Activated B cell treated with CpG ODN at 0.5 μM for 24 hours (primary cell): ENCODE measurements at regions of chr12 and their contacts with region 1.

Region 1: DNA sequence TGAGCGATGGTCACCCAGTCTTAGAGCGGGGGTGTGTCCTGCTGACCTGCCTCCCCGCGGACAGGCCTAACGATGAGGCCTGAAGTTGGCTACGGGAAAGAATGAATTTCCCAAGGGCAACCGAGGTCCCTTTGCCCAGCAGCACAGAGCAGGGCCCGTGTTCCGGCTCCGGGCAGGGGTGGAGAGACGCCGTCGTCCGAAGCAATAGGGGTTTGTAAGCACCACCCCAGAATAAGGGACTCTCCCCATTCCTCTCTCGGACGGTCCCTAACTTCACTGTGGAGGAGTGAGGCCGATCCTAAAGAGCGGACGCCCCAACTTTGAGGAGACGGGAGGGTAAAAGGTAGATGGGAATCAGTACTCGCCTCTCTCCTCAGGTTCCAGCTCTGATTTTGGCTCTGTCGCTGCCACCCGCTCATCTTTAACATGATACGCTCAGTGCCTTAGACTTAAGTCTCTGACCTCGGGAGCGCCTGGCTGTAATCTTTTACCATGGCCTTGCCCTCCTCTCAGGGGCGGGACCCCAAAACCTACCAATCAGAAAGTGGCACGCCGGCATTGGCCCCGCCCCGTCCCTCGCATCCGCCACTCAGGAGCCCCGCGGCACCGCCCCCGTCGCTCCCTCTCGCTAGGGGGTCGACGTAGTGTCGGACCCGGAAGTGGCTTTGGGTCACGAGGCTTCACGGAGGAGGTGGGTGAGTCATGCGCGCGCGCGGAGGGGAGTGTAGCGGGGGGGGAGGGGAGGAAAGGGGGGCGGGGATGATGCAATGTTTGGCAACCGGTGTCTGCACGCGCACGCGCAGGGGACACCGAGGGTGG is at the start of gene DDIT3:
- DNase-seq: peak; percentile 99
- ATAC-seq: peak; percentile 73
- H3K4me3 Mint-ChIP-seq: peak within 1 kb of the TSS; percentile 98
- H3K27ac Mint-ChIP-seq: peak within 1 kb of the TSS; percentile 99
- H3K4me1 Mint-ChIP-seq: peaks cover 59% of the 10 kb centered on the region
- H3K27me3 Mint-ChIP-seq: no peaks in the 10 kb centered on the region
- CTCF ChIP-seq: no peak
- total RNA-seq, gene DDIT3: 30.5 and 34.3 TPM in 2 replicates

Region 2: DNA sequence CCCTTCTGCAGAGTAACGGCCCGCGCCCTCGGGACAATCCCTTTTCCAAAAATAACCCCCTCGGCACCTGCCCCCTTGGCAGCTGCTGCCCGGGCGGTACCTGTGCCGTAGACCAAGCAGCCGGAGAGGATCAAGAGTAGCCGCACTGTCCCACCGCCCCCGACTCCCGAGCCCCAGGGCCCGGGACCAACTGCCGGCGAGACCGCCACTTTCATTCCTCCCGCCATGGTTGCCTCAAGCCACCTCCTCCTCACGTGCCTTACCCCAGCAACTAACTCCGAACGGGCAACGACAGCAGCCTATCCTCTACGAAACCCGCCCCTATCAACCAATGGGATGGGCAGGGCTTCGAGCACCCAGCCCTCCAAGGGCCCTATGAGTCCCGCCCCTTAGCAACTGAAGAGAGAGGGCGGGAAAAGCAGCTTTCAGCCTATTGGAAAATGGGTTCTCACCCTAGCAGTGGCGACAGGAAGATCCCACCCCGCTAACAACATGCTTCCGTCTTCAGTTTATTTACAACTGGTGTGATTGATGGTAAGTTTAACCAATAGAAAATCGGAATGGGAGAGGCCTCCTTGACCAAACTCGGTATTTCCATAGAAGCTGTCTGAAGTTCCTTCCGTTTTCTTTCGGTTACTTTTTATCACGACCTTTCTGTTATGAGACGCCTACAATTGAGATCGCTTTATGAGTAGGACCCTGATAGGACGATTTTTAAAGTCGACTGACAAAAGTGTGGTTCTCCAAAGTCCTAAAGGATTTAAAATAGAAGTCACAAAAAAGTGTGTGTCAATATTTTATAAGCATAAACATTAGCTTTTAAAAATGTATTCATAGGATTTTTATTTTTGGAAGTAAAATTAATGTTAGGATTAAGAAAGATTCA is 441.5 kb before region 1 on chr12 and contains the start of gene NEMP1:
- CTCF ChIA-PET with region 1: no interaction called
- POLR2A ChIA-PET with region 1: no interaction called
- intact Hi-C with region 1: no loop called
- DNase-seq: peak; percentile 79
- ATAC-seq: peak; percentile 97
- H3K4me3 Mint-ChIP-seq: peak within 1 kb of the TSS; percentile 96
- H3K27ac Mint-ChIP-seq: peak within 1 kb of the TSS; percentile 93
- H3K4me1 Mint-ChIP-seq: peaks cover 38% of the 10 kb centered on the region
- H3K27me3 Mint-ChIP-seq: no peaks in the 10 kb centered on the region
- CTCF ChIP-seq: no peak
- total RNA-seq, gene NEMP1: 23.0 and 27.6 TPM in 2 replicates

Region 3: GRCh38 chr12:57238854-57239554 is 281.3 kb before region 1 on chr12:
- CTCF ChIA-PET with region 1: no interaction called
- POLR2A ChIA-PET with region 1: no interaction called
- intact Hi-C with region 1: loop called (anchors 1 kb)
- DNase-seq: peak; percentile 96
- ATAC-seq: peak; percentile 54
- H3K4me3 Mint-ChIP-seq: peak overlapping the region; percentile 89
- H3K27ac Mint-ChIP-seq: peak overlapping the region; percentile 90
- H3K4me1 Mint-ChIP-seq: peaks cover 94% of the 10 kb centered on the region
- H3K27me3 Mint-ChIP-seq: peaks cover 8% of the 10 kb centered on the region
- CTCF ChIP-seq: peak; percentile 99

Region 4: GRCh38 chr12:57476162-57476992 is 43.9 kb before region 1 on chr12:
- CTCF ChIA-PET with region 1: interaction called, 3 read pairs
- POLR2A ChIA-PET with region 1: interaction called, 26 read pairs
- intact Hi-C with region 1: loop called (anchors 1 kb)
- DNase-seq: peak; percentile 54
- ATAC-seq: peak; percentile 38
- H3K4me3 Mint-ChIP-seq: peak overlapping the region; percentile 93
- H3K27ac Mint-ChIP-seq: peak overlapping the region; percentile 100
- H3K4me1 Mint-ChIP-seq: peaks cover 80% of the 10 kb centered on the region
- H3K27me3 Mint-ChIP-seq: no peaks in the 10 kb centered on the region
- CTCF ChIP-seq: no peak

Region 5: DNA sequence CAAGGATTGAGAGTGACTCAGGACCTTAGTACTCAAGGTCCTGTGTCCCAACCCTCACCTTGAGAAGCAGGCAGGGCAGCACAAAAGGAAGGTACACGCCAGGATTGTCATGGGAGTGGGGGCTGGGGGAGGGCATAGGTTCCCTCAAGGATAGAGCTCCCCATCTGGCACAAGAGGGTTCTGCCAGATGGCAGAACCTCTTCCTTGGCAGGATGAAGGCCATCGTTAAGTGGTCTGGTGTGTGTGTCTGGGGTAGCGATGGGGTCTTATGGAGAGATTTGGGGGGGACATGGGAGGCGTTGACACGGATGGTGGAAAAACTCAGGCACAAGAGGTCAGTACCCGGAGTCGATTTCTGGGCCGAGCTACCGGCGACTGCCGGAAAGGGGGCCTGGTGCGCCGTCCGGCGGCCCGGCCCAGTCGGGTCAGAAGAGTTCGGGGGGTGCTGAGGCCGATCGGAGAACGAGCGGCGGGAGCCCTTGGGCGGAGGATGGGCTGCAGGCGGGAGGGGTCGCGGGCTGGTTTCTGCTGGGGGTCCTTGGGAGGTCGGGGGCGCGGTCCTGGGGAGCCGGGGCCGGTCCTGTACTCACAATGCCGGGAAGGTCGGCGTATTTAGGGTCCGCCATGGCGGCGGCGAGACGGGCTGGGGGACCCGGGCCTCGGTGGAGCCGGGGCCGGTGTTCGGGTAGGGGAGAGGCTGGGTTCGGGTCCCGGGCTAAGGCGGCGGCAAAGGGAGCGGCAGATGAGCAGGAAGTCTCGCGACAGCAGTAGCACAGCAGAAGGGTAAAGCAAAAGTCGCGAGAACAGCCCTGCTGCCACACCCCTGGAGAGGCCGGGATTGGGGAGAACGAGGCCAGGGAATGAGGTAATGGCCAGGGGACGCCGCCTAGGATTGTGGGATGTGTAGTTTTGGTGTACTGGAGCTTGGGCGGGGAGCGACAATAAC is 26.4 kb after region 1 on chr12 and contains the start of gene DCTN2:
- CTCF ChIA-PET with region 1: no interaction called
- POLR2A ChIA-PET with region 1: interaction called, 18 read pairs
- intact Hi-C with region 1: loop called (anchors 1 kb)
- DNase-seq: peak; percentile 81
- ATAC-seq: peak; percentile 97
- H3K4me3 Mint-ChIP-seq: peak within 1 kb of the TSS; percentile 99
- H3K27ac Mint-ChIP-seq: peak within 1 kb of the TSS; percentile 84
- H3K4me1 Mint-ChIP-seq: peaks cover 36% of the 10 kb centered on the region
- H3K27me3 Mint-ChIP-seq: peaks cover 10% of the 10 kb centered on the region
- CTCF ChIP-seq: no peak
- total RNA-seq, gene DCTN2: 83.3 and 91.8 TPM in 2 replicates

Region 6: GRCh38 chr12:57621497-57622292 is 101.4 kb after region 1 on chr12:
- CTCF ChIA-PET with region 1: no interaction called
- POLR2A ChIA-PET with region 1: interaction called, 3 read pairs
- intact Hi-C with region 1: loop called (anchors 1 kb)
- DNase-seq: peak; percentile 64
- ATAC-seq: peak; percentile 75
- H3K4me3 Mint-ChIP-seq: peak overlapping the region; percentile 77
- H3K27ac Mint-ChIP-seq: no peak overlapping the region
- H3K4me1 Mint-ChIP-seq: peaks cover 35% of the 10 kb centered on the region
- H3K27me3 Mint-ChIP-seq: peaks cover 82% of the 10 kb centered on the region
- CTCF ChIP-seq: no peak

Region 7: DNA sequence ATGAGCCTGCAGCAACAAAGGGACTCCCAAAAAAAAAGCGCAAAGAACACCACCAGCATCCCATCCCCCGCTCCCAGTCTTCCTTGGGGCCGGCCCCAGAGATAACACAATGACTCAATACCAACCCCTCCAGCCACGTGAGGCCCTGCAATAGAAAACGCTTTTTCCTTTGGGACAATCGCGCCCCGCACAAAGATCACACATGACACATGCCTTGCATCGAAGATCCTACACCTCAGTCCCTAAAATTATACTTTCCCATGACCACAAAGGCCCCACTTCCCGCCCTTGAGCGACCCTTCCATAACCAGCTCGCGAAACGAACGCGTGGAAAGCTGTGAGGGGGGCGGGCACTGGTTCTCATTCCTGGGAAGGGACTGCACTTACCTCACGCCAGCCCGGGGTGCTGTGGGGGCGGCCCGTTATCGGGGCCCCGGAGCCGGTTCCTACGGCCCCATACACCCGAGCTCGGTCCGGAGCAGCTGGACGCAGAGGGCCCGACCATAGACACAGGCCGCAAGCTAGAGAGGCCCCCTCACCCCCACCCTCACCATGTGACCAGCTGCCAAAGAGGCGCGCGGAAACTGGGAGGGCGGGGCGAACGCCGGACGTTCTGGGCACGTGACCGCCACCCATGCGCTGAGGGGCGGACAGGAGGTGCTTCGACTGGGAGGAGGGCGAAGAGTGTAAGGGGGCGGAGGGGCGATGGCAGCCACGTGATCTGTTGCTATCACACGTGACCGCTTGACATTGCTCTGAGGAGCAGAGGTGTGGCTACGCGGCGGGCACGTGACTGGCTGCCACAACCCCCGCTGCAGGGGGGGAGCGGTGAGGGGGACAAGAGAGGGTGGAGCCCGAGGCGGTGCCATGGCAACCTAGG is 231.8 kb after region 1 on chr12 and contains the start of gene CDK4:
- CTCF ChIA-PET with region 1: no interaction called
- POLR2A ChIA-PET with region 1: interaction called, 4 read pairs
- intact Hi-C with region 1: loop called (anchors 2 kb)
- DNase-seq: peak; percentile 94
- ATAC-seq: peak; percentile 76
- H3K4me3 Mint-ChIP-seq: peak within 1 kb of the TSS; percentile 90
- H3K27ac Mint-ChIP-seq: peak within 1 kb of the TSS; percentile 87
- H3K4me1 Mint-ChIP-seq: peaks cover 55% of the 10 kb centered on the region
- H3K27me3 Mint-ChIP-seq: no peaks in the 10 kb centered on the region
- CTCF ChIP-seq: no peak
- total RNA-seq, gene CDK4: 95.7 and 95.9 TPM in 2 replicates